Heart left ventricle (tissue), 16 donors: ENCODE measurements at regions of chr16 and their contacts with region 1.

Region 1: DNA sequence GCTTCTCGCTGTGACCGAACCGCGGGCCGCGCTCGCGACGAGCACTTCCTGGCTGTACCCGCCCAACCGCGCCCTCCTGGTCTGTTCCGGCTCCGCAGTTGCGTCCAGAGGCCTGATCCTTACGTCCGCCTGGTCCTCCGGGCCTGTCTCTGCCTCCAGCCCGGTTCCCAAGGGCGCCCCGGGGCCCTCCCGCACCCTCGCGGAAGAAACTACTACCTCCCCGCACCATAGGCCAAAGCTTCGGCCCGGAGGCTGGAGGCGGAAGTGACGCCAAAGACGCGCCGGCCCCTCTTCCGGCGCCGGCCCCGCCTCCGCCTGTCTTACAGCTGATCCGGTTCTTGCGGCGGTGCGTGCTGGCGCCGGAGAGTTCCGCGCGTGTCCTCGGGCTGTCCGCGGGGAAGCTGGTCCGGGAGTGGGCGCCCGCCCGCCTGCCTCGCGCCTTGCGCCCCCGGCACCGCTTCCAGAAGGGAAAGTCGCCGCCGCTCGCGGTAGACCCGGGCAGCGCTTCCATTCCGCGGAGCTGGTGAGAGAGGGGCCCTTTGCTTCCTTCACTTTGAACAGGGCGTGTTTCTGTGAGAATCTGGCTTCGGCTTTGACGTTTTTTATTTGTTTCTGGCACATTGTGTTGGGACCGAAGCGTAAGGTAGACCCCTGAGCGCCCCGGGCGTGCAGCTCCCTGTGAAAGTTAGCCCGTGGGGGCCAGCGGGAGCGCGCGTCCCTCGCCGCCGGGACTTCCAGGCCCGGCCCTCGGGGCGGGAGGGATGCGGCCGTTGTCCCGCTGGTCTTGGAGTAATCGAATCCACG is at the start of gene ZNF778:
- DNase-seq: peak; percentile 84 to 91 (median 88)
- ATAC-seq: peak; percentile 88 to 97 (median 96)
- H3K4me3 ChIP-seq: peak within 1 kb of the TSS; percentile 62 to 100 (median 92)
- H3K27ac ChIP-seq: peak within 1 kb of the TSS; percentile 89 to 99 (median 95)
- H3K4me1 ChIP-seq: peaks cover 0 to 31% (median 20%) of the 10 kb centered on the region in 12 donors
- H3K27me3 ChIP-seq: no peaks in the 10 kb centered on the region
- CTCF ChIP-seq: no peak
- POLR2A ChIP-seq: peak; percentile 11 to 90
- total RNA-seq, gene ZNF778: 6.9 to 14.6 (median 9.9) TPM

Region 2: GRCh38 chr16:88452482-88453216 is 764.9 kb before region 1 on chr16:
- intact Hi-C with region 1: loop called in 1 of 10 experiments (anchors 5 kb)
- DNase-seq: peak; percentile 97 to 99 (median 98)
- ATAC-seq: peak; percentile 87 to 92 (median 92)
- H3K4me3 ChIP-seq: peak overlapping the region; percentile 27 to 85 (median 64)
- H3K27ac ChIP-seq: peak overlapping the region in 11 of 12 donors; percentile 26 to 79 (median 69)
- H3K4me1 ChIP-seq: peaks cover 7 to 45% (median 27%) of the 10 kb centered on the region in 12 donors
- H3K27me3 ChIP-seq: peaks cover 0 to 22% (median 0%) of the 10 kb centered on the region in 9 donors
- CTCF ChIP-seq: no peak
- POLR2A ChIP-seq: no peak

Region 3: GRCh38 chr16:88737298-88738150 is 480.1 kb before region 1 on chr16:
- intact Hi-C with region 1: loop called in 9 of 10 experiments (anchors 2 to 10 kb)
- DNase-seq: peak; percentile 54 to 87 (median 74)
- ATAC-seq: peak; percentile 39 to 79 (median 66)
- H3K4me3 ChIP-seq: no peak overlapping the region
- H3K27ac ChIP-seq: peak overlapping the region in 1 of 12 donors; percentile 48
- H3K4me1 ChIP-seq: peaks cover 0 to 11% (median 0%) of the 10 kb centered on the region in 12 donors
- H3K27me3 ChIP-seq: no peaks in the 10 kb centered on the region
- CTCF ChIP-seq: peak; percentile 95 to 99 (median 98)
- POLR2A ChIP-seq: no peak

Region 4: GRCh38 chr16:88743693-88744576 is 473.7 kb before region 1 on chr16:
- intact Hi-C with region 1: loop called (anchors 1 to 10 kb)
- DNase-seq: peak; percentile 77 to 88 (median 82)
- ATAC-seq: peak in 3 of 4 donors; percentile 55 to 69 (median 58)
- H3K4me3 ChIP-seq: peak overlapping the region in 1 of 12 donors; percentile 3
- H3K27ac ChIP-seq: peak overlapping the region in 7 of 12 donors; percentile 49 to 84 (median 75)
- H3K4me1 ChIP-seq: peaks cover 0 to 43% (median 27%) of the 10 kb centered on the region in 12 donors
- H3K27me3 ChIP-seq: no peaks in the 10 kb centered on the region
- CTCF ChIP-seq: peak in 11 of 12 donors; percentile 77 to 94 (median 89)
- POLR2A ChIP-seq: no peak

Region 5: GRCh38 chr16:88856828-88857733 is 360.5 kb before region 1 on chr16 and contains the starts of genes GALNS and TRAPPC2L:
- intact Hi-C with region 1: loop called in 2 of 10 experiments (anchors 5 to 10 kb)
- DNase-seq: peak; percentile 98 to 100 (median 99)
- ATAC-seq: peak; percentile 93 to 98 (median 98)
- H3K4me3 ChIP-seq: peak within 1 kb of the TSS; percentile 63 to 98 (median 90)
- H3K27ac ChIP-seq: peak within 1 kb of the TSS in 11 of 12 donors; percentile 53 to 86 (median 81)
- H3K4me1 ChIP-seq: peaks cover 0 to 52% (median 21%) of the 10 kb centered on the region in 12 donors
- H3K27me3 ChIP-seq: no peaks in the 10 kb centered on the region
- CTCF ChIP-seq: no peak
- POLR2A ChIP-seq: peak in 1 of 2 donors; percentile 88
- total RNA-seq, gene GALNS: 10.7 to 22.7 (median 13.3) TPM
- total RNA-seq, gene TRAPPC2L: 20.3 to 65.7 (median 44.2) TPM

Region 6: GRCh38 chr16:89104930-89105571 is 112.5 kb before region 1 on chr16:
- intact Hi-C with region 1: loop called in 1 of 10 experiments (anchors 10 kb)
- DNase-seq: peak in 1 of 5 donors; percentile 56
- ATAC-seq: peak in 3 of 4 donors; percentile 36 to 62 (median 42)
- H3K4me3 ChIP-seq: no peak overlapping the region
- H3K27ac ChIP-seq: no peak overlapping the region
- H3K4me1 ChIP-seq: peaks cover 0 to 2% (median 0%) of the 10 kb centered on the region in 12 donors
- H3K27me3 ChIP-seq: no peaks in the 10 kb centered on the region
- CTCF ChIP-seq: no peak
- POLR2A ChIP-seq: no peak

Region 7: DNA sequence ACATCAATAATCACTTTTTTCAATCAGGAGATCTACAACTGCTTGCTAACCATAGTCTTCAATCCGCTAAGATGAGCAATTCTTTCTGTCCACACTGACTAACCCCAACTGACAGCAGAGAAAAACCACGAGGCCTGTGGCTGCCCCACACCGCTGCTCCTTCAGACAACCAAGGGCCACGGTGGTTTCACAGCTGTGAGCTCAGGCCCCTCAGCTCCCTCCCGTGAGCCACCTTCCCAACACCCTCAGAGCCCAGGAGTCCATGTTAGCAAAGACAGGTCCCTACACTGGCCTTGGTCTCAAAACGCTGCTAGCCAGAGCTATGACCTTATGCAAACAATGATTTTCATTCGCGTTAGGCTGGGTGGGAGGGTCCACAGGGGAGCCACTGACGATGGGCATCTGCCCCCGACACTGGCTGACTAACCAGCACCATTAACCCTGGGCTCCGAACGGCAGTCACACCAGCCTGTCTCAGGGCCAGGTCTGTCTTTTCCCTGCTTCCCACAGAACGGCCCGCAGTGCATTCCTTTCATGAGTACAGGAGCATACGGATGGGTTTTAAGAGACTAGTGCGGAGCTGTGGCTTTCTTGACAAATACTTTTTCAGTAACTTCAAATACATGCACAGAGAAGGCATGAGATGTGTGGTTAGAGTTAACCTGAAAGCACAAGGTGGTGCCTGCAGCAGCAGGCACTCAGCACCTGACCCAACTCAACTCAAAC is 205.5 kb after region 1 on chr16:
- intact Hi-C with region 1: no loop called
- DNase-seq: peak in 1 of 5 donors; percentile 44
- ATAC-seq: peak; percentile 23 to 53 (median 48)
- H3K4me3 ChIP-seq: peak overlapping the region in 1 of 12 donors; percentile 1
- H3K27ac ChIP-seq: peak overlapping the region in 8 of 12 donors; percentile 4 to 44 (median 29)
- H3K4me1 ChIP-seq: peaks cover 7 to 66% (median 46%) of the 10 kb centered on the region in 12 donors
- H3K27me3 ChIP-seq: no peaks in the 10 kb centered on the region
- CTCF ChIP-seq: no peak
- POLR2A ChIP-seq: no peak